ENCODE measurements at regions of chr9 and their contacts with region 1.

Region 1: DNA sequence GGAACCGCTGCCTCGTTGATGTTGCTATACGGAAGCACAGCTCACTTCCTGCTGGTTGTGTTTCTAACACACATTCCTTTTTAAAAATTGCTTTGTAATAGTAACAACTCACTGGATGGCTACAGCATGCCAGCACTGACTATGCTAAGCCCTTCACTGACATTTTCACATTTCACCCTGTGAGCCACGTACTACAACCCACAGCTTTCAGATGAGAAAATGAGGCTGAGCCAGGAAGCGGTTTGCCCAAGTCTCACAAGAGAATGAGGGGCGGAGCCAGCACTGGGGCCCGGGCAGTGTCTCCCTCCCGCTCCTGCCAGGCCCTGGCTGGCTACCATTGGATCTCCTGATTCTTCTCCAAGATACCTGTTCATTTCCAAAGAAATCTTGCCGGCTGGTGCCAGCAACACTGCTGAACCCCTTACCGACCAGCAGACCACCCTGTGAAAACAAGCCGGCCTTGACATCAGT is 38.3 kb downstream of the FAM78A start:
- DNase-seq: peak; percentile 75
- ATAC-seq: peak; percentile 30 to 68 (median 62)
- H3K4me3 ChIP-seq: peak overlapping the region in 5 of 10 donors; percentile 2 to 25 (median 9)
- H3K27ac ChIP-seq: peak overlapping the region; percentile 46 to 95 (median 90)
- H3K4me1 ChIP-seq: peaks cover 10 to 62% (median 43%) of the 10 kb centered on the region in 9 donors
- H3K27me3 ChIP-seq: no peaks in the 10 kb centered on the region
- CTCF ChIP-seq: no peak

Region 2: DNA sequence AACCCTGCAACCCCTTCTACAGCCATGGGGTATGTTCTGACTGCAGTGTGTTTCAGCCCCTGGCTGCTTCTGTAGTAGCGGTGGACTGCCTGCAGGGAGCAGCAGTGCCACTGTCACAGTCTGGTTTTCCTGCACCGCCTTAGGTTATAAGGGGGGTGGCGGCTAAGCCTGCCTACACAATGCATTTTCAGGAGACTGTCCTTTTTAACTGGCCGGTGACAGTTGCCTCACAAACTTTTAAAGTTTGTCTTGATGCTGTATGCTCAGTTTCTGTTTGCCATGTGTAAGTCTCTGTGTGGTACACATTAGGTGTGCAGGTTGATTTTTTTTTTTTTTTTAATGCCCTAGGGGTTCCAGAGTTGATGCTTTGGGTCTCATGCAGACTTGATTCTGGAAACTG is 59.6 kb before region 1 on chr9:
- intact Hi-C with region 1: loop called in 1 of 10 experiments (anchors 5 kb)
- DNase-seq: peak; percentile 67 to 71
- ATAC-seq: peak; percentile 88 to 95 (median 94)
- H3K4me3 ChIP-seq: no peak overlapping the region
- H3K27ac ChIP-seq: no peak overlapping the region
- H3K4me1 ChIP-seq: peaks cover 0 to 29% (median 17%) of the 10 kb centered on the region in 9 donors
- H3K27me3 ChIP-seq: no peaks in the 10 kb centered on the region
- CTCF ChIP-seq: peak; percentile 85 to 98 (median 93)

Region 3: GRCh38 chr9:131253891-131254491 is 16.0 kb after region 1 on chr9:
- intact Hi-C with region 1: loop called in 1 of 10 experiments (anchors 2 kb)
- DNase-seq: peak; percentile 67 to 71
- ATAC-seq: peak; percentile 67 to 84 (median 76)
- H3K4me3 ChIP-seq: no peak overlapping the region
- H3K27ac ChIP-seq: peak overlapping the region; percentile 32 to 93 (median 75)
- H3K4me1 ChIP-seq: peaks cover 14 to 70% (median 54%) of the 10 kb centered on the region in 9 donors
- H3K27me3 ChIP-seq: no peaks in the 10 kb centered on the region
- CTCF ChIP-seq: no peak

Region 4: GRCh38 chr9:131277910-131278701 is 40.1 kb after region 1 on chr9:
- intact Hi-C with region 1: loop called in 3 of 10 experiments (anchors 5 kb)
- DNase-seq: peak; percentile 87 to 92
- ATAC-seq: peak; percentile 40 to 70 (median 60)
- H3K4me3 ChIP-seq: peak overlapping the region; percentile 59 to 92 (median 84)
- H3K27ac ChIP-seq: peak overlapping the region; percentile 89 to 99 (median 98)
- H3K4me1 ChIP-seq: peaks cover 14 to 52% (median 33%) of the 10 kb centered on the region in 9 donors
- H3K27me3 ChIP-seq: peaks cover 0 to 30% (median 14%) of the 10 kb centered on the region in 7 donors
- CTCF ChIP-seq: no peak

Measured in heart right ventricle (tissue), 16 donors.